Left colon (tissue), 2 donors: ENCODE measurements at regions of chr7 and their contacts with region 1.

Region 1: GRCh38 chr7:90424720-90425119 is 21.5 kb downstream of the CLDN12 start:
- DNase-seq: no peak
- ATAC-seq: no peak

Region 2: GRCh38 chr7:90155206-90155605 is 269.5 kb before region 1 on chr7:
- intact Hi-C with region 1: loop called in 1 of 2 experiments (anchors 5 kb)
- DNase-seq: no peak
- ATAC-seq: no peak

Region 3: DNA sequence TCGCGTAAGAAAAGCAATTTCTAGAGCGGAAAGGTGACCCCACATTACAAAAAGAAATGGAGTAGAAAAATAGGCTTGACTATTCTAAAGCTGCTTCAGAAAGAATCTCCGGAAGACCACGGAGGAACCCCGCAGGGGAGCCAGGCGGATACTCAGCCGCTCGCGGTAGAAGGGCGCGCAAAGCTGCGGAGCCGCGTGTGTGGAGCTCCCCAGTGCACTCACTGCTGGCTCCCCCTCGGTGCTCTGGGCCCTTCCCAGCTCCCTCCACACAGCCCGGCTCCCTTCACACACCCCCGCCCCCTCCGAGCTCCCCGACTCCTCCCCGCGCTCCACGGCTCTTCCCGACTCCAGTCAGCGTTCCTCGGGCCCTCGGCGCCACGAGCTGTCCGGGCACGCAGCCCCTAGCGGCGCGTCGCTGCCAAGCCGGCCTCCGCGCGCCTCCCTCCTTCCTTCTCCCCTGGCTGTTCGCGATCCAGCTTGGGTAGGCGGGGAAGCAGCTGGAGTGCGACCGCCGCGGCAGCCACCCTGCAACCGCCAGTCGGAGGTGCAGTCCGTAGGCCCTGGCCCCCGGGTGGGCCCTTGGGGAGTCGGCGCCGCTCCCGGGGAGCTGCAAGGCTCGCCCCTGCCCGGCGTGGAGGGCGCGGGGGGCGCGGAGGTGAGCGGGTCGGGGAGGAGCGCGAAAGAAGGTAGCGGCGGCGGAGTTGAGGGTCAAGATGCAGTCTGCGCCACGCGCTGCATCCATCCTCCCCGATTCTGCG is 213.2 kb before region 1 on chr7 and contains the start of gene STEAP2:
- intact Hi-C with region 1: loop called in 1 of 2 experiments (anchors 5 kb)
- DNase-seq: peak; percentile 89 to 94
- ATAC-seq: peak; percentile 97
- total RNA-seq, gene STEAP2: 16.2 to 25.2 TPM

Region 4: GRCh38 chr7:90312745-90313144 is 112.0 kb before region 1 on chr7:
- intact Hi-C with region 1: loop called in 1 of 2 experiments (anchors 10 kb)
- DNase-seq: no peak
- ATAC-seq: no peak